Activated naive CD4-positive, alpha-beta T cell treated with anti-CD3 and anti-CD28 coated beads, Interleukin-2, amount 10 ng/mL, durations not matched to agents 7 days and 5 days (primary cell): ENCODE measurements at regions of chr6 and their contacts with region 1.

Region 1: DNA sequence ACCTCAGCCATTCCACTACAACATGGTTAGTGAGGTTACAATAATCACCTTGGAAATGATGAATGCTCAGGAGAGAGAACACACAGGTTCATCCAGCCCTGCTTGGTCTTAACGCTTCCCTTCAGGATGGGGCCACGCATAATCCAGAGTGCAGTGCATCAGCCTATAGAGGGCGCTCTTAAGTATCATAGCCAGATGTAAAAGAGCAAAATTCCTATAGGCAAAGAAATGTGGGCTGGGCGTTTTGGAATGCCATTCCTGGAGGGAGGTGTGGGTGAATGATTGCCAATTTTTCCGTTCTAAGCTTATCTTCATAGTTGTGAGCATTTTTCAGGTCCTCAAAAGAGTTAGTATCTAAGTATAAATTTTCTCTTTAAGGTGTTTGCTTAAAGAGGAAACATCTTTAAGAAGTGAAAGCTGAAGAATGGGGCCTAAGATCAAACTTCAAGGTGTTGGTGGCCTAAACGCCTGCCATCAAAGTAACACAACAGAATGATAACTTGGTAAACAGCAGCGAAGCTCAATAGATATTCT is 1.8 kb downstream of the RIPOR2 start:
- DNase-seq: peak; percentile 69
- H3K4me3 Mint-ChIP-seq: peak overlapping the region; percentile 98
- H3K27ac Mint-ChIP-seq: peak overlapping the region; percentile 99
- H3K4me1 Mint-ChIP-seq: peaks cover 47% of the 10 kb centered on the region
- H3K27me3 Mint-ChIP-seq: peaks cover 4% of the 10 kb centered on the region

Region 2: DNA sequence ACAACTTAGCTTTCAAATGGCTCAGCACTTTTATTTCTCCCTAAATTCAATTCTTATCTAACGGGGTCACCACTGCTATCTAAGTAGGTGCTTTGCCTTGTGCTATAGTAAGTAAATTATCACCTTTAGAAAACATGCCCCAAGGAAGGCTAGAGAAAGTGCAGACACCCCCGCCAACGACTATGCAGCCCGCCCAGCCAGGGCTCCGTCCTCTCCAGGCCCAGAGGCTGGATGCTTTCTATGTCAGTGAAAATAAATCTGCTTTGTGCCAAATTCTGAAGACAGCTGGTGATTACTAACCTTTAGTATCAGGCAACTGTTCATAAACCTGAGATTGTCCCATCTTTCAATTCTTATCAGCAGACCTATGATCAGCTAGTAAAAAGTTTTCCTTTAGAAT is 302.3 kb before region 1 on chr6:
- CTCF ChIA-PET with region 1: no interaction called
- DNase-seq: no peak
- H3K4me3 Mint-ChIP-seq: no peak overlapping the region
- H3K27ac Mint-ChIP-seq: no peak overlapping the region
- H3K4me1 Mint-ChIP-seq: no peaks in the 10 kb centered on the region
- H3K27me3 Mint-ChIP-seq: peaks cover 19% of the 10 kb centered on the region

Region 3: GRCh38 chr6:24761193-24761835 is 172.6 kb before region 1 on chr6:
- CTCF ChIA-PET with region 1: no interaction called
- DNase-seq: no peak
- H3K4me3 Mint-ChIP-seq: no peak overlapping the region
- H3K27ac Mint-ChIP-seq: no peak overlapping the region
- H3K4me1 Mint-ChIP-seq: peaks cover 6% of the 10 kb centered on the region
- H3K27me3 Mint-ChIP-seq: no peaks in the 10 kb centered on the region

Region 4: GRCh38 chr6:24855395-24856245 is 78.3 kb before region 1 on chr6:
- CTCF ChIA-PET with region 1: interaction called, 63 read pairs
- DNase-seq: peak; percentile 75
- H3K4me3 Mint-ChIP-seq: no peak overlapping the region
- H3K27ac Mint-ChIP-seq: peak overlapping the region; percentile 97
- H3K4me1 Mint-ChIP-seq: peaks cover 52% of the 10 kb centered on the region
- H3K27me3 Mint-ChIP-seq: no peaks in the 10 kb centered on the region

Region 5: GRCh38 chr6:24910961-24911712 is 22.8 kb before region 1 on chr6:
- CTCF ChIA-PET with region 1: interaction called, 75 read pairs
- DNase-seq: peak; percentile 66
- H3K4me3 Mint-ChIP-seq: peak overlapping the region; percentile 92
- H3K27ac Mint-ChIP-seq: peak overlapping the region; percentile 93
- H3K4me1 Mint-ChIP-seq: peaks cover 94% of the 10 kb centered on the region
- H3K27me3 Mint-ChIP-seq: no peaks in the 10 kb centered on the region

Region 6: DNA sequence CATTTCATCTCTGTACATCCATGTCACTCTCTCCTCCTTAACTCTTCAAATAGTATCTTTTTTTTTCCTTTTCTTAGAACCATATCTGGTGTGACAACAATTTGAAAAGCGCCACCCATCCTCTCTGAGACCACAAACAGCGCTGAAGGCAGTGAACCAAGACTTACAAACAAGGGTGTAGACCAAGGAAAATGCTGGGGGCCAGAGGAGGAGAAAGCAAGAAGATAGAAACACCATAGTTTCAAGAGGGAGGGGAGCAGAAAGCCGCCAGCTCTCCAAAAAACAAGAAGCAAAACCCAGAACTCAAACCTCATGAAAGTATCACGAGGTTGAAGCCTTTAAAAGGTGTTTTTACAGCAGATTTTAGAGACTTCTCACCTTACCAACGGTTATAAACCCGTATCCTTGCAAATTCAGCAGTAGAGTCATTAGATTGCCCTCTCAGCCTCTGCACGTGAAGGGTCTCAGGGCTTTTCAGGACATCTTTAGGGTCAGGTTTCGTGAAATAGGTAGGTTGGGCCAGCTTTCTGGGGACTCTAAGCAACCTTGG is 15.2 kb after region 1 on chr6:
- CTCF ChIA-PET with region 1: interaction called, 88 read pairs
- DNase-seq: peak; percentile 89
- H3K4me3 Mint-ChIP-seq: peak overlapping the region; percentile 29
- H3K27ac Mint-ChIP-seq: peak overlapping the region; percentile 95
- H3K4me1 Mint-ChIP-seq: peaks cover 84% of the 10 kb centered on the region
- H3K27me3 Mint-ChIP-seq: no peaks in the 10 kb centered on the region

Region 7: DNA sequence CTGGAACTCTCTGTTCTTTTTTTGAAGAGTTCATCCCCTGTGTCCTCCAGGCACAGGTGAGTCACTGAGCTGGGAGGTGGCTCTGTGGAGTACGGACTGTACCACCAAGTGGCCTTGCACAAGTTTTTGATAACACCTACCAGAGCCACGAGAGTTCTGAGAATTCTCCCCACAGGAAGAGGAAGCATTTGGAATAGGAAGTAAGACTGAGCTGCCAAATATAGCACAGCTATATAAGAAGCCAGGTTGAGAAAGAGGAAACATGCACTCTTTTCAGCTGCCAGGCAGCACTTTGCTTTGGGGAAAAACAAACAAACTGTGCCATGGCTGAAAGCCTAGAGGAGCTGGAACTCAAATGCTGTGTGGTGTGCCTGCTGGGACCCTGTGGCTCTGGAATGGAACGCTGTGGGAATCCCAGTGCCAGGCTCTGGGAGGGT is 72.6 kb after region 1 on chr6:
- CTCF ChIA-PET with region 1: interaction called, 16 read pairs
- DNase-seq: peak; percentile 77
- H3K4me3 Mint-ChIP-seq: peak overlapping the region; percentile 41
- H3K27ac Mint-ChIP-seq: peak overlapping the region; percentile 89
- H3K4me1 Mint-ChIP-seq: peaks cover 95% of the 10 kb centered on the region
- H3K27me3 Mint-ChIP-seq: no peaks in the 10 kb centered on the region

Region 8: GRCh38 chr6:25027221-25027916 is 93.4 kb after region 1 on chr6:
- CTCF ChIA-PET with region 1: interaction called, 12 read pairs
- DNase-seq: peak; percentile 88
- H3K4me3 Mint-ChIP-seq: peak overlapping the region; percentile 62
- H3K27ac Mint-ChIP-seq: peak overlapping the region; percentile 92
- H3K4me1 Mint-ChIP-seq: peaks cover 53% of the 10 kb centered on the region
- H3K27me3 Mint-ChIP-seq: no peaks in the 10 kb centered on the region